Adrenal gland (tissue), 19 donors: ENCODE measurements at regions of chr18 and their contacts with region 1.

Region 1: GRCh38 chr18:65897292-65897691 is 146.5 kb downstream of the CDH7 start:
- DNase-seq: no peak
- H3K4me3 ChIP-seq: no peak overlapping the region
- H3K27ac ChIP-seq: no peak overlapping the region
- H3K4me1 ChIP-seq: no peaks in the 10 kb centered on the region
- H3K27me3 ChIP-seq: no peaks in the 10 kb centered on the region
- CTCF ChIP-seq: no peak
- POLR2A ChIP-seq: no peak

Region 2: GRCh38 chr18:65835881-65836280 is 61.4 kb before region 1 on chr18:
- intact Hi-C with region 1: loop called in 1 of 2 experiments (anchors 5 kb)
- DNase-seq: no peak
- H3K4me3 ChIP-seq: no peak overlapping the region
- H3K27ac ChIP-seq: no peak overlapping the region
- H3K4me1 ChIP-seq: no peaks in the 10 kb centered on the region
- H3K27me3 ChIP-seq: no peaks in the 10 kb centered on the region
- CTCF ChIP-seq: no peak
- POLR2A ChIP-seq: no peak